Dendritic cell treated with granulocyte-macrophage colony-stimulating factor and Interleukin-4, amounts not matched to agents 40 ng/mL and 50 ng/mL, for 4 days (primary cell): ENCODE measurements at regions of chr1 and their contacts with region 1.

Region 1: GRCh38 chr1:115112496-115113375 is 23.4 kb upstream of the TSPAN2 start:
- H3K4me3 Mint-ChIP-seq: no peak overlapping the region
- H3K27ac Mint-ChIP-seq: no peak overlapping the region
- H3K4me1 Mint-ChIP-seq: peaks cover 21% of the 10 kb centered on the region
- H3K27me3 Mint-ChIP-seq: no peaks in the 10 kb centered on the region

Region 2: GRCh38 chr1:114979278-114979891 is 133.4 kb before region 1 on chr1:
- intact Hi-C with region 1: loop called (anchors 1 kb)
- H3K4me3 Mint-ChIP-seq: no peak overlapping the region
- H3K27ac Mint-ChIP-seq: no peak overlapping the region
- H3K4me1 Mint-ChIP-seq: peaks cover 7% of the 10 kb centered on the region
- H3K27me3 Mint-ChIP-seq: no peaks in the 10 kb centered on the region

Region 3: DNA sequence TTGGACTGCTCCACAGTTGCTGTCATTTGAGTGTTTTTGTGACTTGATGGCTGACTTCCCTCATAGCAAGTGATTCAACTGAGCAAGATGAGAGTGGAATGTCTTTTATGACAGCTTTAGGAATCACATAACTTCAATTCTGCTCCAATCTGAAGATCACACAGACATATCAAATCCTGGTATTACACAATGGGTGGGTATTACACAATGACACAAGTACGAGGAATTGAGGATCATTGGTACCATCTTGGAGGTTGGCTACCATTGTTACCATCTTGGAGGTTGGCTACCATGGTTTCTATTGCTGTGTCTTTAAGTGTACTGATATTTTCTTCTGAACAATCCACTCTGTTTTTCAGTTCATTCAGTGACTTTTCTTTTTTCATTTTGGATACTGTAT is 91.6 kb before region 1 on chr1:
- intact Hi-C with region 1: no loop called
- H3K4me3 Mint-ChIP-seq: no peak overlapping the region
- H3K27ac Mint-ChIP-seq: no peak overlapping the region
- H3K4me1 Mint-ChIP-seq: no peaks in the 10 kb centered on the region
- H3K27me3 Mint-ChIP-seq: peaks cover 2% of the 10 kb centered on the region